Spleen (tissue), 13 donors: ENCODE measurements at regions of chr10 and their contacts with region 1.

Region 1: DNA sequence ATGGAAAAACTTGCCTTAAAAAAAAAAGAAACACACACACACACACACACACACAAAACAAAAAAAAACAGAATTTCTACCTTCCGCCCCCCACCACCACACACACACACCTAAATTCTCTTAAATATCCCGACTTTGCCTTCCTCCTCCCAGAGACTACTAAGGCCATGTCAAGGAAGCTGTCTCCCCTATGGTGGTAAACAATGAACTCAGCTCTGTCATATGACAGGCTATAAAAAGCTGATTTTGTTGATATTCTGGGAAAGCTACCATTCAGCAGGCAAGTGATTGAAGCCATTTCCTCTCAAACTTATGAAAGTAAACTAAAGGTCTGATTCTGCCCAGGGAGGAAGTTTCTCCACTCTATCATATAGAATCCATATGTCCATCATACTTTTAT is 471.0 kb downstream of the GFRA1 start:
- DNase-seq: no peak
- H3K4me3 ChIP-seq: no peak overlapping the region
- H3K27ac ChIP-seq: no peak overlapping the region
- H3K4me1 ChIP-seq: no peaks in the 10 kb centered on the region
- H3K27me3 ChIP-seq: no peaks in the 10 kb centered on the region
- CTCF ChIP-seq: no peak
- POLR2A ChIP-seq: no peak

Region 2: DNA sequence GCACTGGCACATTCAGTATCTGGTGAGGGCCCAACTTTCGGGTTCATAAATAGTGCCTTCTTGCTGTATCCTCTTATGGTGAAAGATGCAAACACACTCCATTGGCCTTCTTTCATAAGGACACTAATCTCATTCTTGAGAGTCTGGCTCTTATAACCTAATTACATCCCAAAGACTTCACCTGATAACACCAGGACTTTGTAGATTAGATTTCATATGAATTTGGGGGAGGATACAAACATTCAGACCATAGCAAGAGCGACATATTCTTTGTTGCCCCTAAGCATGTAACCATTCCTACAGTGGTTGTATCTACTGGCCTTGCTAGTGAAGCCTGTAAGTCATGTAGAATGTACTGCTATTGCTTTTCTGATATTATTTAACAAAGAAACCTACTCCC is 54.2 kb before region 1 on chr10:
- intact Hi-C with region 1: no loop called
- DNase-seq: no peak
- H3K4me3 ChIP-seq: no peak overlapping the region
- H3K27ac ChIP-seq: no peak overlapping the region
- H3K4me1 ChIP-seq: no peaks in the 10 kb centered on the region
- H3K27me3 ChIP-seq: no peaks in the 10 kb centered on the region
- CTCF ChIP-seq: no peak
- POLR2A ChIP-seq: no peak

Region 3: DNA sequence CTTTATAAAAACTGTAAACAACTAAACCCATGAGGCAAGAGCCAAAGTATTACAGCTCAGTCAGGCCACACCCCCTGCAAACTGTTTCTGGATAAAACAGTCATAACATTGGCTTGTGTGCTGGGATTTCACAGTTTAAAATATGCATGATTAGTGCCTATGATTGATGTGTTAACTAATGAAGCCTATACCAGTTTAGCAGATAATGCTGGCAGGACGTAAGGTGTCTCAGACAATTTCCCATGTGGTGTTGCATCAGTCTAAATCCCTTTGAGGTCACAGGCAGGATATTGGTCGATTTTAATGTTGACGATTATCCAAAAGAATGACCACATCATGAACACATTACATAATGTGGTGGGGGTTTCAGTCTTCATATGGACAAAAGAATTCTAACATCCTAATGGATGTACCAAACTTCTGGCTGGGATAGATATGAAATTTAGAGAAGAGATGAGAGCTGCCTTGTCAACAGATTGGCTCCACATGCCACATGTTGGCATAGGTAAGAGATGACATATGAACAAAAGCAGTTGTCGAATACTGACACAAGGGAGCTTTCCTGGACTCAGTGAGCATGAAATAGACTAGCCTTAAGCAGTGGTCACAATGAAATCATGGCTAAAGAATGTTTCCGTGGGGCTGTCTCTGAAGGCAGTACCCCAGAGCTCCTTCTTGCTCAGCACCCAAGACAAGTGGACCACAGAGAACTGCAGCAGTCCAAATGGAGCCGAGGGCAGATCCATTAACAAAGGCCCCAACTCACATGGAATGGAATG is 25.4 kb after region 1 on chr10:
- intact Hi-C with region 1: loop called (anchors 2 kb)
- DNase-seq: no peak
- H3K4me3 ChIP-seq: no peak overlapping the region
- H3K27ac ChIP-seq: no peak overlapping the region
- H3K4me1 ChIP-seq: no peaks in the 10 kb centered on the region
- H3K27me3 ChIP-seq: no peaks in the 10 kb centered on the region
- CTCF ChIP-seq: no peak
- POLR2A ChIP-seq: no peak